ENCODE measurements at regions of chr10 and their contacts with region 1.

Region 1: DNA sequence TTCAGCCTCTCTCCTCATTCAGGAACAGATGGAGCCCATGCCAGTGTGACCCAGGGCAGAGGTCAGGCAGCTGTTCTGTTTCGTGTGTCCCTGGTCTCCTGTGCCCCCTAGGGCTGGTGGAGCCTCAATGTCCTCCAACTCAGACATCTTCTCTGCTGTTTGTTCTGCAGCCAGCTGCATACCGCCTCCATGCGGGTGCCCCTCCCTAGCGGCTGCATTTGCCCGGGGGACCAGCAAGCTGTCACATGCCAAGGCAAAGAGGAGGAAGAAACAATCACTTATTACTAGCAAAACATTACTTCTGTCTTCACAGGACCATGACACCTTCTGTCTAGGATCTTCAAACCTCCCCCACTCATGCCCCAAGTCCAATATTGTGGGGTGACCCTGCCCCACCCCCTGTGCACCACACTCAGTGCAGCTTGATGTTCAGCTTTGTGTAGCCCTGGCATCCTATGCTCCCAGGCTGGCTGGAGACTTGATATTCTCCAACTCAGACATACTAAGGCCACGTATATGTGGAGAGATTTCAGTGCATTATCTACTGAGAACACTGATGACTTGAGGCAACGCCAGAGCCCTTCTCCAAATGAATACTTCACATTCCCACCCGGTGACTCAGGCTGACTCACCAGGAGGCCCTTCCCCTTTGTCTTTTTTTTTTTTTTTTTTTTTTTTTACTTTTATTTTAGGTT is 188.9 kb downstream of the SKIDA1 start:
- DNase-seq: no peak

Region 2: DNA sequence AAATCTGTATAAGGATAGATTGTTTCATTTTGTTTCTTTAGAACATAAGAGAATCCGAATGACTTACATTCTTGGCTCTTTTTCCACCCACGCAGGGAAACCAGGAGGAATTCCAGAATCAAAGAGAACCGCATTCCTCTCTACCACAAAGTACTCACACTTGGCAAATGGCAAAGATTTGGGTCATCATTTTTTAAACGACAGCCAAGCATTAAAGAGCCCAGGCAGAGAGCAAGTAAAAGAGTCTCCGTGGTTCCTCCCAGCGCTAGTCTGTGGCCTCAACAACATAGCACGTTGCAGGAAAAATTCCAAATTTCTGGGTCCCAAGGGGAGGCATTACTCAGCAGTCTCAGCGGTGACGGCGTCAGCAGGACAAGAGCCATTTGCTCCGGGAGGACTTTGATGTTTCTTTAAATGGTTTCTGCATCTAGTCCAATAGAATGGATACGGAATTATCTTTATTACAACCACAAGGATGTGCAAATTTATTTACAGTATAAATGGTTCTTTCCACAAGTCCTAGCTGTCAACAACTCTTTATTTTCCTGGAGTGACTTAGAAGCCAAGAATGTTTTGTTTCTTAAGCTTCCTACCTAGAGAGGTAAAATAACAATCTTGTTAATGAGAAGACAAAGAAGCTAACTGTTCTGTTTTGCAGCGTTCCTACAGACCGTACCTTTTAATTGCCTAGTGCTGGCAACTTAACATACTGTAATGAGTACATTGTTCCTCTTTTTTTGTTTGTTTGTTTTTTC is 43.7 kb before region 1 on chr10:
- intact Hi-C with region 1: loop called (anchors 5 kb)
- DNase-seq: peak; percentile 78

Region 3: DNA sequence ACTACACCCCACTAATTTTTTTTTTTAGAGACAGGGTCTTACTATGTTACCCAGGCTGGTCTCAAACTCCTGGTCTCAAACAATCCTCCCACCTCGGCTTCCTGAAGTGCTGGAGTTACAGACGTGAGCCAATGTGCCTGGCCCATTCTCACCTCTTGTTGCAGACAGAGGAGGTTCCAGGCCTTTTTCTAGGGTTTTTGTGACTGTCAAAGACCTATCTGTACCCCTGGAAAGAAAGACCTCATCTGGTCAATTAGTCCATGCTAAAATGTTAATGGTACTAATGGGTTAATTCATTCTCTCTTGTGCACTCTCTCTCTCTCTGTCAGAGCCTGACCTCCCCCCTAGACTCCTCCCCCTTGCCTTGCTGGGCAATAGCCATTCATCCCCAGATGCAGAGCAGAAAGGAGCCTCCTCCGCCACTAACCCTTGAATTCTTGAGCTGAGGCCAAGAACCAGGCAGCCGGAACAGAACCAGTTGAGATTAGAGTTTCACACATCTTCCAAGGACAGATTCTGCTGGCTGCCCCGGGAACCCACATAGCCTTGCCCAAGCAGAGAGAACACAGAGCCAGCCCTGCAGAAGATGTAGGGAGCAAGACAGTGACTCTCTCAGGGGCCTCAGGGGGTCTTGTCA is 20.9 kb before region 1 on chr10:
- intact Hi-C with region 1: loop called (anchors 2 kb)
- DNase-seq: peak; percentile 85

Measured in cardiac septum (tissue), 1 donor.